ENCODE measurements at regions of chr20 and their contacts with region 1.

Region 1: DNA sequence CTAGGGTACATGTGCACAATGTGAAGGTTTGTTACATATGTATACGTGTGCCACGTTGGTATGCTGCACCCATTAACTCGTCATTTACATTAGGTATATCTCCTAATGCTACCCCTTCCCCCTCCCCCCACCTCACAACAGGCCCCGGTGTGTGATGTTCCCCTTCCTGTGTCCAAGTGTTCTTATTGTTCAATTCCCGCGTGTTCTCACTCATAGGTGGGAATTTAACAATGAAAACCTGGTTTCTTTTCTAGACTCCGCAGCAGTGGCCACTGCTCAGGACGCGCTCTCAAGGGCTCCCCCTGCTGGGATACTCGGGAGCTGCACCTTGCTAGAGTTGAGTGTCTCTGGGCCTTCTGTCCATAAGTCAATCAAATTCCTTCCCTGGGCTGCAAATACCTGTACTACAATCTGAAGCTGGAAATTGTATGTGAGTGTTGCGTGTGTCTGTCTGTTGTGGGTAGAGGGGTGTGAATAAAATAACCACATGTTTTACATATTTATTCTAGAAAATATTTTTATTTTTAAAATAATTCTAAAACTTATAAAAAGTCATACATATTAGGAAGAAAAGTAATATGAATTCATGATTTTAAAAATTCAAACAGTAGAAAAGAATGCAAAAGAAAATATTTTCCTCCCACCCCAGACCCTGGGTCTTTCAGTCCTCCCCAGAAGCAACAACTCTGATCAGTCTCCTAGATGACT is 8.2 kb upstream of the CEP250 start:
- DNase-seq: peak; percentile 80
- CTCF ChIP-seq: peak; percentile 89

Region 2: DNA sequence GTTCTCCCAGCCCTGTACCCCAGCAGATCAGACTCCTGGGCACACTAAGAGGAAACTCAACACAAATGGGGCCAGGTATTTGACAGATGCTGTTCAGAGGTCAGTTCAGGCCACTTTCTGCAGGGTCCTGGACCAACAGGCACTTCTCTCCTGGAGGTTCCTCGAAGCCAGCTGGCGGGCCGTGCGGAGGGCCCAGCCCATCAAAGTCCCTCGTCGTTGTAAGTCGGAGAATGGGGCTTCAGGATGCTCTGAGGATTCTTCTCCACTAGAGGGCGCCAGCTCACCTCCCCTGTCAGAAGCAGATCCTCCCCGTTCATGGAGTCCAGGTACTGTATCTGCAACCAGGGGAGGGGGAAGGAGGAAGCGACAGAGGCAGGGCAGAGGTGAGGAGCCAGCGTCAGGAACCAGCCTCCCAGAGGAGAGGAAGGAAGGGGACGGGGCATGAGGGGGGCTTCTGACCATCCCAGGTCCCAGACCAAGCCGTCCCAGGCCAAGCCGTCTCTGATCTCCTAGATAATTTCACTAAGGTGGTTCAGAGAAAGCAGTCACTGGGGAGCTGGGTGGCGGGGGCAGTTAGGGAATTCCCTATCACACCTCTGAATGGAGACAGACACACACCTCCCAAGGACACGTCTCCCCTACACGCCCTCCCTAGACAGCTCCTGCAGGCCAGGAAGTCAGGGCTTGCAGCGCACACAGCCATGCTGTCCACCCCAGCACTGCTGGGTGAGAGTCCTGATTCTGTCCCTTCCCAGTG is 143.3 kb before region 1 on chr20:
- in situ Hi-C with region 1: loop called (anchors 10 kb)
- DNase-seq: peak; percentile 88
- CTCF ChIP-seq: peak; percentile 91

Region 3: GRCh38 chr20:35368666-35369423 is 78.4 kb before region 1 on chr20:
- in situ Hi-C with region 1: no loop called
- DNase-seq: no peak
- CTCF ChIP-seq: no peak

Region 4: DNA sequence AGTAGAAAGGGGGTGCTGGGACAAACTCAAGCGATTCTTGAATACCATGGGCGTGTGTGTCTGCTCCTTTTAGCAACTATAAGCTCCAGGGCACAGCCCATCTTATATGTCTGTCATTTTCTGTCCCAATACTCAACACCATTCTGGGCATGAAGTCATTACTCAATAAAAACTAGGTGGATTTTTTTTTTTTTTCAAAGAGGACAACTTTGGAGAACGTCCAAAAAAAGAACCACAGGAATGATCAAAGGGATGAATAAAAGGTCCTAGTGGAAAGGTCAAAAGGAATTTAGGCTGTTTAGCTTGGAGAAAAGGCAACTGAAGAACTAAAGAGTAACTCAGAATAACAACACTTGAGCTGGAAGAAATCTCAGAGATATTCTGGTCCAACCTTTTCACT is 59.9 kb before region 1 on chr20:
- in situ Hi-C with region 1: loop called (anchors 10 kb)
- DNase-seq: no peak
- CTCF ChIP-seq: no peak

Region 5: DNA sequence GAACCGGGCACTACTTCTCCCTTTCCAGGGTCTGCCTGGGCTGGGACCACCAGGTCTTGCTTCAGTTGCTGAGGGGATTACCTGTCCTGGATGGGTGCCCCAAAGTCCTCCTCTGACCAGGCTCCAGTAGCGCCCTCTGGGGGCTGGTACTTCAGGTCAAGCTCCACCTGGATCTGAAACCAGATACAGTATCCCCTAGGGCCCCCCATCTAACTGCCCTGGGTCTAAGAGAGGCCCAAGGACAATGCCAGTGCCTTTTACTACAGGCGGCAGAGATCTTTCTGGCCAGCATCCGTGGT is 157.2 kb after region 1 on chr20:
- in situ Hi-C with region 1: no loop called
- DNase-seq: peak; percentile 33
- CTCF ChIP-seq: peak; percentile 55

Region 6: DNA sequence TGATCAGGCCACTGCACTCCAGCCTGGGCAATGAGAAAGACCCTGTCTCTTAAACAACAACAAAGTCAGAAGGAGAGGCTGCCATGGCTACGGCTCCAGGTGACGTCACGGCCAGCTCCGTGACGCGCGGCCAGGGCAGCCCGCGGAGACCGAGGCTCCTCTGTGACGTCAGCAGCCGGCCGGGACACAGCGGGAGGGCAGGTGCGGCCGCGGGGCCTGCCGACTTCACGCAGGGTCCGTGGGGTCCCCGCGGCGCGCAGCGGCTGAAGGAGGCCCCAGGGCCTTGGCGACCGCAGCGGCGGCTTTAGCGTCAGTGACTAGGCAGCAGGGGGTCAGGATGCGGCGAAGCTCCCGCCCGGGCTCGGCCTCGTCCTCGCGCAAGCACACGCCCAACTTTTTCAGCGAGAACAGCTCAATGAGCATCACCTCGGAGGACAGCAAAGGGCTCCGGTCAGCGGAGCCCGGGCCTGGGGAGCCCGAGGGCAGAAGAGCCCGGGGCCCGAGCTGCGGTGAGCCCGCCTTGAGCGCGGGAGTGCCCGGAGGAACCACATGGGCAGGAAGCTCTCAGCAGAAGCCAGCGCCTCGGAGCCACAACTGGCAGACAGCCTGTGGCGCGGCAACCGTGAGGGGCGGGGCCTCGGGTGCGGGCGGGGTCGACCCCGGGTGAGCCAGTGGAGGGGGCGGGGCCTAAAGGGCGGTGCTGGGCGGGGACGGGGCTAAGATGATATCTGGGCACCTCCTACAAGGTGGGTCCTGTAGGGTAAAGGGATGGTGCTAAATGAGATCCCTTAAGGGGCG is 168.6 kb after region 1 on chr20 and contains the start of gene SPAG4:
- in situ Hi-C with region 1: no loop called
- DNase-seq: peak; percentile 99
- CTCF ChIP-seq: no peak